T-cell (primary cell): ENCODE measurements at regions of chr1 and their contacts with region 1.

Region 1: DNA sequence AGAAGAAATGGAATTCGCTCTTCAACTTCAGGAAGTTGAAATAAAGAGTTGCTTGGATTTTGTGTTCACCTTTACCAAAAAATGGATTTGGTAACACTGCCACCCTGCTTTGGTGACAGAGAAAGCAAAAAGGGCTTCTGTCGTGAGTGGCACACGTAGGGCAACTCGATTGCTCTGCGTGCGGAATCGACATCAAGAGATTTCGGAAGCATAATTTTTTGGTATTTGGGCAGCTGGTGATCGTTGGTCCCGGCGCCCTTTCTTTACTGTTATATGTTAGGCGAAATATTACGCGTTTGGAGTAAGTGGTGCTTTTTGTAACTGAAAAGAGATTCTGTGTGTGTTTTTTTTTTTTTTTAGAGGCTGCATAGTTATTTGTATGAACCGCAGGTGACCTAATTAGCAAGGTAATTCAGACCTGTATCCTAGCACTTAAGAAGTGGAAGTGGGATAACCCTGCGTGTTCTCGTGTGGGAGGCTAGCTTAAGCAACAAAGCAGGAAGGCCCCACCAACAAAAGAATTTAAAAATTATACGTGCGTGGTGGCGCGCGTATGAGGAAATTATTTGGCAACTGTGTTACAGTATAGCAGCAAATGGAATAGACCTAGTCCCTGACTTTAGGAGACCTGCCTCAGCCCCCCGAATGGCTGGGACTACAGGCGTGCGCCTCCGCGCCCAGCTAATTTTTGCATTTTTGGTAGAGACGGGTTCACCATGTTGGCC is at the start of gene RNU11:
- DNase-seq: peak; percentile 65 to 95 (median 86)
- ATAC-seq: peak; percentile 74 to 79 (median 77)
- H3K4me3 ChIP-seq: peak within 1 kb of the TSS; percentile 56 to 66
- H3K4me3 Mint-ChIP-seq: peak within 1 kb of the TSS; percentile 69 to 89 (median 71)
- H3K27ac ChIP-seq: peak within 1 kb of the TSS; percentile 100
- H3K27ac Mint-ChIP-seq: peak within 1 kb of the TSS; percentile 100
- H3K4me1 ChIP-seq: peaks cover 17 to 31% of the 10 kb centered on the region in 2 experiments
- H3K4me1 Mint-ChIP-seq: peaks cover 25 to 32% (median 31%) of the 10 kb centered on the region in 3 donors
- H3K27me3 ChIP-seq: no peaks in the 10 kb centered on the region
- H3K27me3 Mint-ChIP-seq: no peaks in the 10 kb centered on the region
- total RNA-seq, gene RNU11: not detected

Region 2: GRCh38 chr1:28229089-28229488 is 419.5 kb before region 1 on chr1:
- CTCF ChIA-PET with region 1: no interaction called
- POLR2A ChIA-PET with region 1: interaction called in 1 of 2 experiments, 14 read pairs
- DNase-seq: no peak
- ATAC-seq: no peak
- H3K4me3 ChIP-seq: no peak overlapping the region
- H3K4me3 Mint-ChIP-seq: no peak overlapping the region
- H3K27ac ChIP-seq: no peak overlapping the region
- H3K27ac Mint-ChIP-seq: no peak overlapping the region
- H3K4me1 ChIP-seq: peaks cover 5 to 28% of the 10 kb centered on the region in 2 experiments
- H3K4me1 Mint-ChIP-seq: peaks cover 31 to 38% (median 36%) of the 10 kb centered on the region in 3 donors
- H3K27me3 ChIP-seq: no peaks in the 10 kb centered on the region
- H3K27me3 Mint-ChIP-seq: no peaks in the 10 kb centered on the region

Region 3: DNA sequence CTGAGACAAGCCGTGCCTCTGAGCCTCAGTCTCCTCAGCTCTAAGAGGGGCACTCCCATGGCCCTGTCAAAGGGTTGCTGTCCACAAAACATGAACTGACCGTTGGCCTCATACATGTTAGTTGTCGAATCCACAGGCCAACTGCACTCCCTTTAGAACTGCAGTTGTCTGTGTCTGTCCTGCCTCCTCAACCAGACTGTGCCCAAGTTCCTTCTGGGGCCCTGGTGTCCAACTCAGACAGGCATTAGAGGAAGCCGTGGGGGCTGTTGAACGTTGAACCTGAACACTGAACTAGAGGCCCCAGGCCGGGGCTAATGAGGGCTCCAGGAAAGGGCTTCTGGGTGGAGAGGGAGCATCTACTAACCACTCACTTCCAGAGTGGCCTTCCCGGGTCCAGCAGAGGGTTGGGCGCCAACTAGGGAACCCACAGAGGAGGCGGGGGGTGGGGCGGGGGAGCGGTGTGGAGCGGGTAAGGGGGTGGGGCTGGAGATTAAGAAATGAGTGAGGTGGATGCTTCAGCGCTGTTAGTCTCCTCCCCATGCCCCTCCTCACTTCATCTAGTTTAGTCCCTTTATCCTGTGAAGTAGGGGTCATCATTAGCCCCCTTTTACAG is 56.8 kb before region 1 on chr1 and contains the start of gene RAB42:
- CTCF ChIA-PET with region 1: no interaction called
- POLR2A ChIA-PET with region 1: no interaction called
- DNase-seq: peak in 4 of 35 experiments; percentile 2 to 16 (median 6)
- ATAC-seq: peak; percentile 48 to 82 (median 60)
- H3K4me3 ChIP-seq: peak within 1 kb of the TSS; percentile 25 to 26
- H3K4me3 Mint-ChIP-seq: peak within 1 kb of the TSS; percentile 75 to 78 (median 77)
- H3K27ac ChIP-seq: no peak within 1 kb of the TSS
- H3K27ac Mint-ChIP-seq: no peak within 1 kb of the TSS
- H3K4me1 ChIP-seq: peaks cover 0 to 8% of the 10 kb centered on the region in 2 experiments
- H3K4me1 Mint-ChIP-seq: peaks cover 0 to 8% (median 5%) of the 10 kb centered on the region in 3 donors
- H3K27me3 ChIP-seq: peaks cover 0 to 25% of the 10 kb centered on the region in 2 experiments
- H3K27me3 Mint-ChIP-seq: peaks cover 0 to 7% of the 10 kb centered on the region in 2 donors
- total RNA-seq, gene RAB42: not detected

Region 4: GRCh38 chr1:28792644-28793121 is 144.0 kb after region 1 on chr1:
- CTCF ChIA-PET with region 1: no interaction called
- POLR2A ChIA-PET with region 1: interaction called in 1 of 2 experiments, 15 read pairs
- DNase-seq: no peak
- ATAC-seq: no peak
- H3K4me3 ChIP-seq: no peak overlapping the region
- H3K4me3 Mint-ChIP-seq: no peak overlapping the region
- H3K27ac ChIP-seq: no peak overlapping the region
- H3K27ac Mint-ChIP-seq: no peak overlapping the region
- H3K4me1 ChIP-seq: no peaks in the 10 kb centered on the region
- H3K4me1 Mint-ChIP-seq: peaks cover 0 to 7% (median 0%) of the 10 kb centered on the region in 3 donors
- H3K27me3 ChIP-seq: peaks cover 0 to 21% of the 10 kb centered on the region in 2 experiments
- H3K27me3 Mint-ChIP-seq: peaks cover 13 to 17% of the 10 kb centered on the region in 2 donors